T-cell (primary cell): ENCODE measurements at regions of chr2 and their contacts with region 1.

Region 1: GRCh38 chr2:149050188-149050587 is 11.7 kb downstream of the LYPD6B start:
- DNase-seq: no peak
- ATAC-seq: no peak
- H3K4me3 ChIP-seq: no peak overlapping the region
- H3K4me3 Mint-ChIP-seq: no peak overlapping the region
- H3K27ac ChIP-seq: no peak overlapping the region
- H3K27ac Mint-ChIP-seq: no peak overlapping the region
- H3K4me1 ChIP-seq: no peaks in the 10 kb centered on the region
- H3K4me1 Mint-ChIP-seq: no peaks in the 10 kb centered on the region
- H3K27me3 ChIP-seq: peaks cover 0 to 5% of the 10 kb centered on the region in 2 experiments
- H3K27me3 Mint-ChIP-seq: peaks cover 18 to 20% of the 10 kb centered on the region in 2 donors

Region 2: GRCh38 chr2:149313512-149313972 is 263.4 kb after region 1 on chr2:
- CTCF ChIA-PET with region 1: no interaction called
- POLR2A ChIA-PET with region 1: interaction called in 1 of 2 experiments, 17 read pairs
- DNase-seq: peak in 1 of 35 experiments; percentile 11
- ATAC-seq: peak in 2 of 4 experiments; percentile 45 to 46
- H3K4me3 ChIP-seq: no peak overlapping the region
- H3K4me3 Mint-ChIP-seq: no peak overlapping the region
- H3K27ac ChIP-seq: no peak overlapping the region
- H3K27ac Mint-ChIP-seq: no peak overlapping the region
- H3K4me1 ChIP-seq: no peaks in the 10 kb centered on the region
- H3K4me1 Mint-ChIP-seq: peaks cover 0 to 8% (median 3%) of the 10 kb centered on the region in 3 donors
- H3K27me3 ChIP-seq: peaks cover 0 to 3% of the 10 kb centered on the region in 2 experiments
- H3K27me3 Mint-ChIP-seq: peaks cover 10 to 23% of the 10 kb centered on the region in 2 donors